ENCODE measurements at regions of chr4 and their contacts with region 1.

Region 1: GRCh38 chr4:25439918-25440477 is 62.9 kb downstream of the ANAPC4 start:
- DNase-seq: peak; percentile 73 to 88
- H3K4me3 ChIP-seq: no peak overlapping the region
- H3K27ac ChIP-seq: peak overlapping the region in 1 of 5 donors; percentile 8
- H3K4me1 ChIP-seq: peaks cover 0 to 10% (median 3%) of the 10 kb centered on the region in 4 donors
- H3K27me3 ChIP-seq: no peaks in the 10 kb centered on the region
- CTCF ChIP-seq: peak in 5 of 7 experiments; percentile 65 to 88 (median 68)
- EP300 ChIP-seq: no peak
- POLR2A ChIP-seq: no peak

Region 2: GRCh38 chr4:25767877-25768725 is 328.1 kb after region 1 on chr4:
- intact Hi-C with region 1: loop called (anchors 2 kb)
- DNase-seq: peak; percentile 42 to 90
- H3K4me3 ChIP-seq: no peak overlapping the region
- H3K27ac ChIP-seq: no peak overlapping the region
- H3K4me1 ChIP-seq: peaks cover 0 to 13% (median 4%) of the 10 kb centered on the region in 4 donors
- H3K27me3 ChIP-seq: no peaks in the 10 kb centered on the region
- CTCF ChIP-seq: peak in 5 of 7 experiments; percentile 33 to 52 (median 46)
- EP300 ChIP-seq: no peak
- POLR2A ChIP-seq: no peak

Measured in stomach (tissue), 19 donors.